WTC11 (cell line): ENCODE measurements at regions of chr11 and their contacts with region 1.

Region 1: DNA sequence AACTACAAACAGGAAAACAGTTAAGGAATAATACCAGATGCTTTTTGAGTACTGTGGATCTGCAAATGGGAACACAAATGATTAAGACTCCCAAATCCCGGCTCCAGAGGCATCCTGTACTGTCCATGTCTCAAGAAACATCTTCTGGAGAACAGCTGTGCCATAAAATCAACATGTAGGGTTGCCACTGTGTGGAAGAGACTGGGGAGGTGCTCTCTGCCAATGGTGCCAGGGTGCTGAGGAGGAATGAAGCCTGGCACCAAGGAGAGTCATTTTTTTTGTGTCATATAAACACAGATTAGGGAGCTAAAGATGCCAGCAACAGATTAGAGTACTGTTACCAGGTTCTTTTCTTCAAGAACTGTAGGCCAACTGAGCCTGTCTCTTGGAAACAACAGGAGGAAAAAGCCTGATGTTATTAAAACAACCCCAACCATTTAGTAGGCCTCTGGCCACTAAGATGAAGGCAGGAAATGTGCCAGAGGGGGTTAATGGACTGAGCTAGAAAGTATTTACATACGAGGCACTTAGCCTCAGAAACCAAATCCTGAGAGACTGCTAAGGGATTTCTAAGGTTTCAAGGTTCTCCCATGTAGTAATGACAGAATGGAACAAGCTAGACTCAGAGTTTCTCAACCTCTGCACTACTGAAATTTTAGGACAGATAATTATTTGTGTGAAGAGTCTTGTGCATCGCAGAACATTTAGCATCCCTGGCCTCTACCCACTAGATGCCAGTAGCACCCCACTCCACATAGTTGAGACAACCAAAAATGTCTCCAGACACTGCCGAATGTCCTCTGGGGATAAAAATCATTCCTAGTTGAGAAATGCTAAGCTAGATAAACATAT is 54.6 kb upstream of the CHRM4 start:
- DNase-seq: no peak
- ATAC-seq: peak; percentile 92
- H3K4me3 Mint-ChIP-seq: no peak overlapping the region
- H3K27ac Mint-ChIP-seq: no peak overlapping the region
- H3K4me1 Mint-ChIP-seq: peaks cover 24% of the 10 kb centered on the region
- H3K27me3 Mint-ChIP-seq: peaks cover 11% of the 10 kb centered on the region
- CTCF ChIP-seq: no peak

Region 2: DNA sequence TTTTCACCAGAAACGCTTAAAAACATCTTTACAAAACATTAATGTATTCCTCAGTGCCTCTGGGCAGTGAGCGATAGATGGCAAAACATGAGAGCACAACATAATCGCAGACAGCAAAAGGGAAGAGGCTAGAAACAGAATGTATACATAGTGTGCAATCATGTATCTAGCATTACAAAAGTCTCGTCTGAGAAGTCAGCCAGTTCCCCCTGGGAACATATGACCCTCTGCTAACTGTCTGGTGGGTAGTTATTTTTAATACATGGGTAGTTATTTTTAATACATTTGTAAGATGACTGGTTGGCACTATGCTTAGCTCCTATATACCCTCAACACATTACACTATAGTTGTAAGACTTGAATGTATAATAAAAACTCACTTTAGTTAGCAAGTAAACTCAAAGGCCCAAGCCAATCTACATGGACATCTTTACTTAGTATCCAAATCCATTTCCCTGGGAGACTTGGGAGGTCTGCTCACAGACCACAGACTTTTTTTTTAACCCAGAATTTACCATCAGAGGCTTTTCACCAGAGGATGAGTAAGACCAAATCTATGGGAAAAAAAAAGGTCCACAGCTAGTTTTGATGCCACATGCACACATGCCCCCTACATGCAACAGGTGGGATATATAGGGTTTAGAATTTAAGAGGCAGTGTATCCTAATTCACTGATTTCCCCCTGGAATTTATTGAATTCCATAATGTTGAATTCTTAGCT is 76.0 kb after region 1 on chr11:
- CTCF ChIA-PET with region 1: interaction called, 12 read pairs
- POLR2A ChIA-PET with region 1: no interaction called
- DNase-seq: no peak
- ATAC-seq: no peak
- H3K4me3 Mint-ChIP-seq: no peak overlapping the region
- H3K27ac Mint-ChIP-seq: no peak overlapping the region
- H3K4me1 Mint-ChIP-seq: peaks cover 36% of the 10 kb centered on the region
- H3K27me3 Mint-ChIP-seq: no peaks in the 10 kb centered on the region
- CTCF ChIP-seq: no peak

Region 3: GRCh38 chr11:46633291-46634217 is 187.4 kb after region 1 on chr11:
- CTCF ChIA-PET with region 1: no interaction called
- POLR2A ChIA-PET with region 1: no interaction called
- DNase-seq: no peak
- ATAC-seq: no peak
- H3K4me3 Mint-ChIP-seq: no peak overlapping the region
- H3K27ac Mint-ChIP-seq: no peak overlapping the region
- H3K4me1 Mint-ChIP-seq: no peaks in the 10 kb centered on the region
- H3K27me3 Mint-ChIP-seq: no peaks in the 10 kb centered on the region
- CTCF ChIP-seq: no peak

Region 4: GRCh38 chr11:46675288-46675851 is 229.2 kb after region 1 on chr11:
- CTCF ChIA-PET with region 1: no interaction called
- POLR2A ChIA-PET with region 1: no interaction called
- DNase-seq: no peak
- ATAC-seq: no peak
- H3K4me3 Mint-ChIP-seq: no peak overlapping the region
- H3K27ac Mint-ChIP-seq: peak overlapping the region; percentile 98
- H3K4me1 Mint-ChIP-seq: peaks cover 28% of the 10 kb centered on the region
- H3K27me3 Mint-ChIP-seq: no peaks in the 10 kb centered on the region
- CTCF ChIP-seq: no peak